ENCODE measurements at regions of chr2 and their contacts with region 1.

Region 1: DNA sequence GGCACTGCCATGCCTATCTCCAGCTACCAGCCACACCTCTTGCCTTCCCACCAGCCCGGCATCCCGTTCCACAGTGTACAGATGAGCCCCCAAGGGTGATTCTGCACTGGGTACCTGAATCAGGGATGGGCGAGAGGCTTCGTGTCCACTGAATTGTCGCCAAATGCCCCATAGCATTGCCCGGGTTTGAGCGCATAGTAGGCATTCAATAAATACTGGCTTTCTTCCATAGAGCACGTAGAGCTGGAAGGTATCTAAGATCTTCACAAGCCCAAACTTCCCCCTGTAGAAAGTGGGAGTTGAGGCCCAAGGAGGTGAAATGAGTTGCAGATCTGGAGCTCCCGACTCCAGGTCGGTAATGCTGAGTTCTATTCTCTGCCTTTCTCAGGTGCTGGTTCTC is 358.7 kb downstream of the LPIN1 start:
- DNase-seq: no peak
- H3K4me3 ChIP-seq: no peak overlapping the region
- H3K27ac ChIP-seq: no peak overlapping the region
- H3K27me3 ChIP-seq: no peaks in the 10 kb centered on the region
- CTCF ChIP-seq: no peak

Region 2: DNA sequence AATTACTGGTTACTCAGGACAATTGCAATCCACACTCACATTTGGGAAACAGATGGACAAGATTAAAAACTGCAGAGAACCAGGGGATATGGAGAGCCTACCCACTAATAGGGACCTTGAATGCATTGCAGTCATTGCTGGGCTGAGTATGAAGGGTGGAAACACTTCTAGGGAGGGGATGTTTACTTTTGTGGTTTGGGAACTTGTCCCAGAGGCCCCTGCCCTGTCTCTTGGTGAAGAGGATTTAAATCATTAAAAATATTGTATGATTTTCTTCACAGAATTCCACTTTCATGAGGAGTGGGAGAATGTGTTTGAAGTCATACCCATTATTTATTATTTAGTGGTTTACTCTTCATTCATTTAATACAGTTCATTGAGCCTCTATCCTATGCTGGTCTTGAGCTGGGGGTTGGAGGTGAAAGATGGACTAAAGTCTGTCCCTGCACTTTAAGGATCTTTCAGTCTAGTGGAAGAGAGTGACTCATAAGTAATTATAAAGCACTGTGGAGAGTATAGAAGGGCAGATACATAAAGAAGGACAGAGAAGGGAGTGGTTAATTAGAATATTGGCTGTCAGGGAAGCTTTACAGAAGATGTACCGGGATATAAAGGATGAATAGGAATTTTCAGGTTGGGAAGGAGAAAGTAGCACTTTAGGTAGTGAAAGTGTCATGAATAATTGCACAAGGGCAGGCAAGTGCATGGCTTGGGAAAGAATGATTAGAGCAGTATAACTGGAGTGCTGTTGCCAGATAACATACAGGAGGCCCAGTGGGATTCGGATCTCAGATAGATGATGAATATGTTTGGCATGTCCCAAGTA is 45.4 kb before region 1 on chr2:
- CTCF ChIA-PET with region 1: no interaction called
- POLR2A ChIA-PET with region 1: no interaction called
- DNase-seq: no peak
- H3K4me3 ChIP-seq: no peak overlapping the region
- H3K27ac ChIP-seq: no peak overlapping the region
- H3K27me3 ChIP-seq: no peaks in the 10 kb centered on the region
- CTCF ChIP-seq: no peak

Region 3: GRCh38 chr2:12141618-12142258 is 36.6 kb after region 1 on chr2:
- CTCF ChIA-PET with region 1: no interaction called
- POLR2A ChIA-PET with region 1: no interaction called
- DNase-seq: no peak
- H3K4me3 ChIP-seq: no peak overlapping the region
- H3K27ac ChIP-seq: no peak overlapping the region
- H3K27me3 ChIP-seq: peaks cover 22% of the 10 kb centered on the region
- CTCF ChIP-seq: no peak

Region 4: DNA sequence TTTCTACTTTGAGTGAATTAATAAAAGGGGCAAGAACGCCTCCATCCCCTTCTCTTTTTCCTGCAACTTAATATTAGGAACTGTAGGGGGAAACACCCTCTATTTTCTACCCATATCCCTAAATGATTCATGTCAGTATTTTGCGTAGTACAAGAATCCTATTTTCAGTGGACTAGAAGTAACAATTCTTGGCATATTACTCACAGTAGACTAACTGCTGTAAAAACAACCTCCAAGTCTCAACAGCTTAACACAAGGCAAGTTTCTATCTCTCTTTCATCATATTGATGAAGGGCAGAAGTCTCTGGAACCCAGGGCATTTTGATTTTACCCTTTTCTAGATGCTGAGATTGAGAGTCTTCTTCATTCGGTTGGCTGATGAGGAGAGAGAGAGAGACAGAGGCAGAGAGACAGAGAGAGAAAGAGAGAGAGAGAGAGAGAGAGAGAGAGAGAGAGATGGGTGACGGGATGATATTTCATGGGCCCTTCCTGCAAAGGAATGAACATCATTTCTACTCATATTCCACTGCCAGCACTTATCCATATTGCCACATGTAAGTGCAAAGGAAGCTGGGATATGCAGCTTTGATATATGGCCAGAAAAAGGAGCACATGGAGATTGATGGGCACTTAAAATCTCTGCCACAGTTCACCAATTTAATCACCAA is 122.9 kb after region 1 on chr2:
- CTCF ChIA-PET with region 1: interaction called, 10 read pairs
- POLR2A ChIA-PET with region 1: no interaction called
- DNase-seq: peak; percentile 15
- H3K4me3 ChIP-seq: no peak overlapping the region
- H3K27ac ChIP-seq: no peak overlapping the region
- H3K27me3 ChIP-seq: no peaks in the 10 kb centered on the region
- CTCF ChIP-seq: no peak

Measured in AG04450 (cell line).